Vagina (tissue), 2 donors: ENCODE measurements at regions of chr5 and their contacts with region 1.

Region 1: GRCh38 chr5:78803353-78803752 is 154.8 kb upstream of the LHFPL2 start:
- DNase-seq: peak in 1 of 2 donors; percentile 94
- H3K4me3 ChIP-seq: no peak overlapping the region
- H3K27ac ChIP-seq: peak overlapping the region; percentile 54
- H3K4me1 ChIP-seq: peaks cover 7% of the 10 kb centered on the region
- H3K27me3 ChIP-seq: no peaks in the 10 kb centered on the region
- CTCF ChIP-seq: no peak
- POLR2A ChIP-seq: no peak

Region 2: DNA sequence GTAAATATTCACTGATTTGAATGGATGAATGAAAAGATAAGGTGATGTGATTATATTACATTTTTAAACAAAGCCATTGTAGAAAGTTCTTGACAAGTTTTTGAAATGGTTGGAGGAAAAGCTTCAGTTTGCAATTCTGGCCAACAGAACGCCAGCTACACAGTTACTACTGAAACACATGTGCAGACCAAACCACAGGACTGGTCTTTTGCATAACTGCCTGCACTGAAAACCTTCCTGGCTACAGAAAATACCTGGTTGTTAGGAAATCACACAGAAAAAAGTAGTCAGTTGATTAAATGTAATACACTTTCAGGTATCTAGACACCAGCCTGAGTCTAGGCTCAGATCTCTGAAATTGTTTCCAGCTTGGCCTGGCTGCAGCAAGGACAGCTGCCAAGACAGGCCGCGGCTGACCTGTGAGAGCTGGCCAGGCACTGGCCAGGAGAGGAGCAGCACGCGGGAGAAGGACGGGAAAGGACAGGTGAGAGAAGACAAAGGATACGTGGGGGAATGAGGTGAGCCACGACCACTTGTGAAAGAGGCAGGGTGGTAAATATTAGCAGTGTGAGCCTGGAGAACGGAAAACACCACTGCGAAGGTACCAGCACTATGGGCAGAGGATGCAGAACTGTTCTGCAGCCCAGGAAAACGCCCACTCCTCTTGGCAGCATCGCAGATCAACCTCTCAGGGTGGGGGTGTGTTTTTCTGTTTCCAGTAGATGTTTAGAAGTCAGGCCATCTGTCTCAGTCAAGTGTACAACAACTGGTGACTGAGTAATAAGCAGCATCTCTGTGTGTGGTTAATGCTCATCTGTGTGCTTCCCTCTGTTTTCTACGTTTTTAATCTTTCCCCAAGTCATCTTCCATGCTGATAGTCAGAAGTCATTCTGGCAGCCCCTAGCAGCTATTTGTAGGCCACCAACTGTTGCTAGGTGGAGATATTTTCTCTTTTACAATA is 305.5 kb before region 1 on chr5:
- intact Hi-C with region 1: loop called (anchors 10 kb)
- DNase-seq: peak in 1 of 2 donors; percentile 80
- H3K4me3 ChIP-seq: no peak overlapping the region
- H3K27ac ChIP-seq: no peak overlapping the region
- H3K4me1 ChIP-seq: peaks cover 44% of the 10 kb centered on the region
- H3K27me3 ChIP-seq: no peaks in the 10 kb centered on the region
- CTCF ChIP-seq: no peak
- POLR2A ChIP-seq: no peak

Region 3: GRCh38 chr5:78758169-78758839 is 45.0 kb before region 1 on chr5:
- intact Hi-C with region 1: no loop called
- DNase-seq: no peak
- H3K4me3 ChIP-seq: no peak overlapping the region
- H3K27ac ChIP-seq: no peak overlapping the region
- H3K4me1 ChIP-seq: peaks cover 20% of the 10 kb centered on the region
- H3K27me3 ChIP-seq: no peaks in the 10 kb centered on the region
- CTCF ChIP-seq: no peak
- POLR2A ChIP-seq: no peak

Region 4: DNA sequence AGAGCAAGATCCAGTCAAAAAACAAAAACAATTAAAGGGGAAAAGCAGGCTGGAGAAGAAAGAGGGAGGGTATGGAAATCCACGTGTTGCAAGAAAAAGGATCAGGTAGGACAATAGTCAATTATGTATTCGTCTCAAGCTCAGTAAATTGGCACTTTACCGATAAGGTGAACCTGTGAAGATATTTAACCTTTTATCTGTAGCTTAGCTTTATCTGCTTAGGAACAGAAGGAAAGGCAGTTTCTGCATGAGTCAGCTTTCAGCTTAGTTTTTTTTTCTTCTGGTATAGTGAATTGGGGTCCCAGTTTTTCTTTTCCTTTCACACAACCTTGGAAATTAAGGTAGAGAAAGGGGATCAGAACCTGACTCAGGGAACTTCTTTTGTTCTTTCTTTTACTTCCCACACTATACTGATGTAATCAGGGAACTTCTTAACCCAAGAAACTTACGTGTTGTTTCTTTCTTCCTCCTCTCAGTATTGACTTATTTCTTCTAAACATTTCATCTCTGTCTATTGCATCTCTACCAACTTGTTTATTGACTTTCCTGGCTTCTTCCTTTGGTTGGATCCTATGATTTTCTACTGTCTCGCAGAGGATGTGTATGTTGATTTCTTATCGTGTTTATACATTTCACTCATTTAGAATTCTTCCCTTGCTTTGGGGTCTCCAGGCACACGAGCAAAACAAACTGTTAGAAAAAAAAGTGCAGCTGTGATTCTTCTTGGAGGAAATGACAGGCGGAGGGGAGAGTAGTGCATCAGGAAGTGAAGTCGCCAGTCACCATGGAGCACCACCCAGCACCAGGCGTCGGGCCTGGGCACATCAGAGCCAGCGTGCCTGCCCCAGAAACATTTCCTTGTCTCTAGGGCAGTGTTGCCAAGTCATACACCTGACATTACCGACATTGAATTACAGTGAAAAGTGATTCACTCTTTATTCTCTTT is 31.8 kb before region 1 on chr5:
- intact Hi-C with region 1: no loop called
- DNase-seq: no peak
- H3K4me3 ChIP-seq: no peak overlapping the region
- H3K27ac ChIP-seq: no peak overlapping the region
- H3K4me1 ChIP-seq: no peaks in the 10 kb centered on the region
- H3K27me3 ChIP-seq: no peaks in the 10 kb centered on the region
- CTCF ChIP-seq: no peak
- POLR2A ChIP-seq: no peak

Region 5: GRCh38 chr5:79898611-79899010 is 1095.3 kb after region 1 on chr5:
- intact Hi-C with region 1: no loop called
- DNase-seq: no peak
- H3K4me3 ChIP-seq: no peak overlapping the region
- H3K27ac ChIP-seq: no peak overlapping the region
- H3K4me1 ChIP-seq: no peaks in the 10 kb centered on the region
- H3K27me3 ChIP-seq: no peaks in the 10 kb centered on the region
- CTCF ChIP-seq: no peak
- POLR2A ChIP-seq: no peak